ENCODE measurements at regions of chr12 and their contacts with region 1.

Region 1: GRCh38 chr12:105705765-105706164 is 375.3 kb downstream of the C12orf75 start:
- DNase-seq: no peak
- H3K4me3 ChIP-seq: no peak overlapping the region
- CTCF ChIP-seq: peak; percentile 62

Region 2: DNA sequence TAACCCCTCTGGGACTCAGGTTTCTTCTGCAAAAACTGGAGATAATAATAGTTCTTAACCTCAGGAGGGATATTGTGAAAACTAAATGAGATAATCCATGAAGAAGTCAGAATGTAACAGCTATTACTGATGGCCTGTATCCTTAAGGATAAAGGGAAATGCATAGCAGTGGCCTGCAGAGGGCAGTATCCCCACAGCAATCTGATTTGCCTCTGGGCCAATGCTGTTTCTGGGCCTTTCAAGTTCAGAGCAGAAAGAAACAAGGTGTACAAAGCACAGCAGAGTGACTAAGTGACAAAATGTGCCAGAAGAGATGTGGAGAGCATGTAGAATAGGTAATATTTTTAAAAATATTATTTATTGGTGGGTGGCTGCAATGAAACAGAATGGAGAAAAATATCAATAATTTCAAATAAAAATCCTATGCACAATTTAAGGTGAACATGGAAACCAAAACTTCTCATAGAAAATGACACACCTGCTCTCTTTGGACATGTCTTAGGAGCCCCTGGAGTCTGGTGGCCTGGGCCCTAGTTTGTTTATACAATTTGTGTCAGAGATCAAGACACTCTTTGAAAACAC is 285.0 kb before region 1 on chr12:
- CTCF ChIA-PET with region 1: interaction called, 35 read pairs
- POLR2A ChIA-PET with region 1: no interaction called
- DNase-seq: peak; percentile 33
- H3K4me3 ChIP-seq: no peak overlapping the region
- CTCF ChIP-seq: peak; percentile 79

Region 3: DNA sequence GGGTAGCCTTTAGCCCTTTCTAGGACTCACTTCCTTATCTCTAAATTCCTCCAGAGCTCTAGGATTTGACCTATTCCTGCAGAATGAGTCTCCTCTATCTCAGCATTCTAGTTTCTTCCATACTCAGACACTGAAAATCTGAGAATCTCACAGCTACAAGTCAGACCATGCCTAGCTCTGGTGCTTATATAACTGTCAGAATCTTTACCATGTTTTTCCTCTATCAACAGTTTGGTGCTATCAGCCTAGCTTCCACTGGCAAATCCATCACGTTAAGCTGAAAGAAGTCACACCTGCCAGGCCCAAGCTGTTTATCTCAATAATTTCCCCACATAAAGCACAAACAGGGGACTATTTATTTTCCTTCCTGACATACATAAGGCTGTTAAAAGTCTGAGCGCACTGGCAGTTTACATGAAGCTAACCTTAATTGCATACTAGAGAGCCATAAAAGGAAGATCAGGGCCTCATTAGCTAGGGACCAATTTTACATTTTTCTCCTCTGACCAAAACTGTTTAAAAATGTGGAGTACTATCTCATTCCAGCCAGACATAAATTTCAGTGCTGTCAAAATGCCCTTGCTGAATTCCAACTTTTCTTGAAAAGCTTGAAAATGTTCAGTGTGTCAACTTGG is 104.7 kb before region 1 on chr12:
- CTCF ChIA-PET with region 1: no interaction called
- POLR2A ChIA-PET with region 1: no interaction called
- DNase-seq: peak; percentile 12
- H3K4me3 ChIP-seq: no peak overlapping the region
- CTCF ChIP-seq: no peak

Region 4: GRCh38 chr12:105721051-105721825 is 15.5 kb after region 1 on chr12:
- CTCF ChIA-PET with region 1: interaction called, 24 read pairs
- POLR2A ChIA-PET with region 1: no interaction called
- DNase-seq: no peak
- H3K4me3 ChIP-seq: no peak overlapping the region
- CTCF ChIP-seq: no peak

Region 5: DNA sequence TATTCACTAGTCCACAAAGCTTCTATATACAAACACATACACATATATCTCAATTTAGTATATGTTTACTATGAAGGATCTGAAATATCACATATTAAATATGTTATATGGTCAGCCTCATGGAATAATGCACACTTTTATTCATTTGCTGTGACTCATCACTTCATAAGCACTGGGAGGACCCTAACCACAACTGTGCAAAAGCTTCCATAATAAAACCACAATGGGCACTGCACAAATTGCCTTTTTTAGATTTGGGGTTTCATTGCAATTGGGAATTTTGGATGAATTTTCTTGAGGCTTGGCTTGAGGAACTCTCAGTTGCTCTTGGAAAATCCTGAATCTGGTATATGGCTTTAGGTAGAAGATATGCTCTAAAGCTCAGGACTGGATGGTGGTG is 24.2 kb after region 1 on chr12:
- CTCF ChIA-PET with region 1: interaction called, 24 read pairs
- POLR2A ChIA-PET with region 1: no interaction called
- DNase-seq: no peak
- H3K4me3 ChIP-seq: no peak overlapping the region
- CTCF ChIP-seq: no peak

Region 6: DNA sequence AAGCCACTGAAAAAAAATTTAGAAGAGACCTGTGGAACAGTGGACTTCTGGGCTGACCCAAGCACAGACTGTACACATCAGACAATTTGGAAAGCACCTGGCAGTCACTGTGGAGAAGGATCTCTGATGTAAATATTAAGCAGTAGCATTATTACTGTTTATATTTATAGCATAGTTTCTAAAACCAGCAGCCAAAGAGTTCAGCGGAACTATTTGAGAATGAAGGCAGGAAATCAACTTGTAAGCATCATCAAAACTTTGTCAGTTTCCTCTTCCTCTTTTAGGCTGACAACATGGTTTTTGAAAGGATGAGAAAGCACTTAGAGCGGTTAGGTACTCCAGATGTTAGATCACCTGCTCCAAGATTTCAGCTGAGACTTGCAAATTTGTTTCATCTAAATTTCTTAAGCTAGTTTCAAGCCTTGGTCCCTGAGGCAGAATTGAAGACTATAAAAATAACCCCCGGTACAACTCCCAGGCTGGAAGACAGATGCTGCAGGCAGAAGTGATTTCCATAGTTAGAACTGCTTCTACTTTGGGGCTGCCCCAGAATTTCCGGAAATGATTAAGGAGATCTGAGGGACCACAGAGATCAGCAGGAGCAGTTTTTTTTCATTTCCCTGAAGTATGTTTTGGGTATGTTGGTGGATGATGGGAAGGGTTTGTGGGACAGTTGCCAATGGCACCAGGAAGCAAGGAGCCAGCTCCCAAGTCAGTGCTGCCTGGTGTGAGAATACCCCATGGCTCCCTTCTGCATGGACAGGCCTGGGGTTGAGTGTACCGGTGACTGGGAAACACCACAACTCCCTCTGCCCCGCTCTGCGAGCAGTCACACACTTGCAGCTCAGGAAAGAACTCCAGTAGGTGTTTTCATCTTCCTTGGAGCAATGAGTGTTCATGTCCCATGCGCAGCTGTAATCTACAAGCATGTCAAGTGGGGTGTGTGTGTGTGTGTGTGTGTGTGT is 78.5 kb after region 1 on chr12:
- CTCF ChIA-PET with region 1: no interaction called
- POLR2A ChIA-PET with region 1: no interaction called
- DNase-seq: no peak
- H3K4me3 ChIP-seq: no peak overlapping the region
- CTCF ChIP-seq: no peak

Region 7: DNA sequence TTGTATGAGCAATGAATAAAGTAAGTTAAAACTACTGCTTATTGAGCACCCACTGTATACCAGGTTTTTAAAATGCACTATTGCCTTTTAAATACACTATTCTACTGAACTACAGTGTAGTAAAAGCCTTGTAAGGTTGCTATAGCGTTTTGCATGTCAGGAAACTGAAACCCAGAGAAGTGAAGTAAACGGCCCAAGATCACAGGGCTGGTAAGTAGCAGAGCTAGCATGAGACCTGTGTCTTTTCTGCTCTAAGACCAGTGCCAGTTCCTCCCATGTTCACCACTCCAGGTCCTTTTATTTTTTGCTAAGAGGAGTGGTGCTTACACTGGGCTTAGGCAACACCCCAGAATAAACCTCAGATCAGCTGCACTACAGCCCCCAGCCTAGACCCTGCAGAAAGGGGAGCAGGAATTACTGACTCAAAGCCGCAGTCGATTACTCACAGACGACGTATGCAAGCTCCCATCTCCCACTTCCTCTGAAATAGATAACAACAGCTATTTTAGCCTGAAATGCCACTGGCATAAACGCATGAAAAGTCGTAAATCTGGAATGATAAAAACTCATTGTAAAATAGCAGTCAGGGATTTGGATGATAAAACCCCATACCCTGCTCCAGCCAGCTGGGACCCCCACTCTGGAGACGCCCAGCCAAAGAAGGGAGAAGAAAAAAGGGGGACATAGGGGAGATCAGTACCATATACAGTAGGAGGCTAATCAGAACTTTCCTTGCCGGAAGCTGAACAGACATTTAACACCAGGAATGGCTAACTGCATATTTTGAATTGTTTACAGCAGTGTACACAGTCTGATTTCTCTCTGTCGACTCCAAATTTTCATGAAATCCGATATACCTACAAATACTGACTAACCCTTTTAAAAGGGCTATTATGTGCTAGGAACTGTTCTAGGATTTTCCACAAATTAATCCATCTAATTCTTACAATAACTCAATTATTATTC is 324.7 kb after region 1 on chr12:
- CTCF ChIA-PET with region 1: interaction called, 10 read pairs
- POLR2A ChIA-PET with region 1: no interaction called
- DNase-seq: peak; percentile 96
- H3K4me3 ChIP-seq: peak overlapping the region; percentile 34
- CTCF ChIP-seq: no peak

Measured in AG04449 (cell line).